WTC11 (cell line): ENCODE measurements at regions of chr20 and their contacts with region 1.

Region 1: DNA sequence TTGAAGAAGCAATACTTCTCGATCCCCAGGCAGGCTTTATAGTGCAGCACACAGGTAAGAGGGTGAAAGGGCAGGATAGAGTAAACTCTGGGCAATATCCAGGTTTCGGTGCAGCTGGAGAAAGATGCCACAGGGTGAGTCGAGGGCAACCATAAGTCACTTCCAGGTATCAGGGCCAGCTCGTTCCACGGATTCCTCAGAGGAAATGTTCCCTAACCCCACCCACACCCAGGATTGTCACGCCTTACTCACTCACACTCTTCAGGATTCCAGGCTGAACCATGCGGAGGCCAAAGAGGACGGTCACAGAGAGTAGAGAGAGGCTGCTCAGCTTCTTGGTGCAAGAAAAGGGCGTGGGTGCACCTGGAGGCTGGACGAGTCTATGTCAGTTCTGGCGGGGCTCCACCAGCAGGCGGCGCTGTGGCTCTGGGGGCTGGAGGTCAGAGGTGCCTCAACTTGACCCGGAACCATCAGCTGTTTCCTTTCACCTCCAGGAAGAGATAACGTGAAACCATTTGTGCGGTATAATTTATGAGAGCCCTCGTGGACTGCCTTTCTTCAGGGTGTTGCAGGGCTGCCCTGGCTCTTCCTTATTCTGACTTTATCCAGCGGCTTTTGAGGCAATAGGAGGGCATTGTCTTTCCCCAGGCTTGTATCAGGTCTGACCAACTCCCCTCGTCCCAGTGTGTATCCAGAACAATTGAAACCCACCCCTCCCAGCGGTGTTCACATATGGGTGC is 14.5 kb upstream of the WFDC12 start:
- DNase-seq: peak; percentile 95
- ATAC-seq: peak; percentile 96
- H3K4me3 Mint-ChIP-seq: no peak overlapping the region
- H3K27ac Mint-ChIP-seq: no peak overlapping the region
- H3K4me1 Mint-ChIP-seq: no peaks in the 10 kb centered on the region
- H3K27me3 Mint-ChIP-seq: peaks cover 30% of the 10 kb centered on the region
- CTCF ChIP-seq: peak; percentile 98

Region 2: DNA sequence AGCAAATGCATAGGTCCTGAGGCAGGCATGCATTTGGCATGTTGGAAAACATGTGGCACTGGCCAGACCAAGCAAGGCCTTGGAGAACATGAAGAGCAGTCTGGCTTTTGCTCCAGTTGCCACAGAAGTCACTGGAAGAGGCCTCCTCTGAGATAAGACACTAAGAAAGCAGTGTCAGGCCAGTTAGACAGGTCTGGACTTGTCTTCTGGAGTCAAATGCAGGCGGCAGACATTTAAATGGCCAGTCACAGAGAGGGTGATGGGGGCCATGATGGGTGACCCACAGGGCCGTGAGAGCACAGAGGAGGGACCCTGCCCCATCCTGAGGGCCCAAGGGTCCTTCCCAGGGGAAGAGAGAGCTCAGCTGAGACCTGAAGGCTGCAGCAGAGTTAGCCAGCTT is 460.5 kb before region 1 on chr20:
- CTCF ChIA-PET with region 1: no interaction called
- POLR2A ChIA-PET with region 1: no interaction called
- DNase-seq: no peak
- ATAC-seq: no peak
- H3K4me3 Mint-ChIP-seq: no peak overlapping the region
- H3K27ac Mint-ChIP-seq: 0 out of 2 replicates have a peak overlapping the region, but pooled peaks have one; percentile 44
- H3K4me1 Mint-ChIP-seq: peaks cover 9% of the 10 kb centered on the region
- H3K27me3 Mint-ChIP-seq: peaks cover 3% of the 10 kb centered on the region; the same call in 1 of the 2 replicates
- CTCF ChIP-seq: no peak

Region 3: DNA sequence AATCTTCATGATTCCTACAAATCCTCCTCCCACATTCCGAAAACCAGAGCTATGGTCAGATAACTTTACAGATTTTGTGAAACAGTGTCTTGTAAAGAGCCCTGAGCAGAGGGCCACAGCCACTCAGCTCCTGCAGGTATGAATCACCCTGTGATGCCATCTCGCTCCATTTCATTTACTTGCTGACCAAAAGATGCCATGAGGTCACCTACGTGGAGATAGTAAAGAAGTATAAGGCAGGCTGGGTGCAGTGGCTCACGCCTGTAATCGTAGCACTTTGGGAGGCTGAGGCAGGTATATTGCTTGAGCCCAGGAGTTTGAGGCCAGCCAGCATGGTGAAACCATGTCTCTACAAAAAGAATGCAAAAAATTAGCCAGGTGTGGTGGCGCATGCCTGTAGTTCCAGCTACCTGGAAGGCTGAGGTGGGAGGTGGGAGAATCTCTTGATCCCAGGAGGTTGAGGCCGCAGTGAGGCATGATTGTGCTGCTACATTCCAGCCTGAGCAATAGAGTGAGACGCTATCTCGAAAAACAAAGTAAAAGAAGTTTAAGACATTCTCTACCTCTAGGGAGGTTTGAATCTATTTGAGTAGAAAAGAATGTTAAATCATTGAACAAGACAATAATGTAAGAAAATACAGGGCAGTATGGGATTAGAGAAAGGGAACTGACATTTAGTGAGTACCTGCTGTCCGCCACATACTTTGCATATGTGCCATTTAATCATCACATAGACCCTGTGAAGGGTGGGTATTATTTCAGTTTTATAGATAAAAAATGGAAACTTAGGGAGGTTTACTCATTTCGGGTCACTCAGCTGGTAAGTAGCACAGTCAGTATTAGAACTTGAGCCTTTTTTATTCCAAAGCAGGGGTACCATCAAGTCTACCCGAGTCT is 141.3 kb before region 1 on chr20:
- CTCF ChIA-PET with region 1: no interaction called
- POLR2A ChIA-PET with region 1: no interaction called
- DNase-seq: no peak
- ATAC-seq: no peak
- H3K4me3 Mint-ChIP-seq: no peak overlapping the region
- H3K27ac Mint-ChIP-seq: peak overlapping the region; percentile 52; the same call in 1 of the 2 replicates
- H3K4me1 Mint-ChIP-seq: peaks cover 5% of the 10 kb centered on the region
- H3K27me3 Mint-ChIP-seq: no peaks in the 10 kb centered on the region
- CTCF ChIP-seq: no peak

Region 4: DNA sequence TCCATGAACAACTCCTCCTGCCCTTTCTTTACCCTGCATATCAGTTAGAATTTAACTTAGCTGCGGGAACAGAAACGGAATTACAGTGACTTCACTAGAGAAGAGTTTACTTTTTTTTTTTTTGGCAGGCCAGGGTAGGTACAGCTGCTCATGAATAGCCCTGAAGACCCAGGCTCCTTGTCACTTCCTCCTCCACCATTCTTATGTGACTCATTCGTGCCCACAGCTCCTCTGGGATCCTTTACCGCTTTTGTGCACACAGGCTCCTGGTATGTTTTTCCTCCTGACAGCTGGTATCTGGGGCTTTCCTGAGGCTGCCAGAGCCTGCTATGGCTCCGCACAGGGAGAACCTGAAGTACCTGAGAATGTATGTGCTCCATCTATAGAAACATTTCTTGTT is 33.9 kb before region 1 on chr20:
- CTCF ChIA-PET with region 1: interaction called, 29 read pairs
- POLR2A ChIA-PET with region 1: no interaction called
- DNase-seq: no peak
- ATAC-seq: no peak
- H3K4me3 Mint-ChIP-seq: no peak overlapping the region
- H3K27ac Mint-ChIP-seq: no peak overlapping the region
- H3K4me1 Mint-ChIP-seq: peaks cover 6% of the 10 kb centered on the region
- H3K27me3 Mint-ChIP-seq: peaks cover 27% of the 10 kb centered on the region
- CTCF ChIP-seq: no peak

Region 5: GRCh38 chr20:45128071-45128470 is 10.7 kb before region 1 on chr20:
- CTCF ChIA-PET with region 1: interaction called, 21 read pairs
- POLR2A ChIA-PET with region 1: no interaction called
- DNase-seq: no peak
- ATAC-seq: no peak
- H3K4me3 Mint-ChIP-seq: no peak overlapping the region
- H3K27ac Mint-ChIP-seq: no peak overlapping the region
- H3K4me1 Mint-ChIP-seq: no peaks in the 10 kb centered on the region
- H3K27me3 Mint-ChIP-seq: peaks cover 37% of the 10 kb centered on the region
- CTCF ChIP-seq: no peak

Region 6: GRCh38 chr20:45193331-45193730 is 54.6 kb after region 1 on chr20:
- CTCF ChIA-PET with region 1: interaction called, 10 read pairs
- POLR2A ChIA-PET with region 1: no interaction called
- DNase-seq: no peak
- ATAC-seq: no peak
- H3K4me3 Mint-ChIP-seq: no peak overlapping the region
- H3K27ac Mint-ChIP-seq: no peak overlapping the region
- H3K4me1 Mint-ChIP-seq: peaks cover 8% of the 10 kb centered on the region
- H3K27me3 Mint-ChIP-seq: 0 out of 2 replicates have a peak, but pooled peaks cover 4% of the 10 kb centered on the region
- CTCF ChIP-seq: no peak

Region 7: DNA sequence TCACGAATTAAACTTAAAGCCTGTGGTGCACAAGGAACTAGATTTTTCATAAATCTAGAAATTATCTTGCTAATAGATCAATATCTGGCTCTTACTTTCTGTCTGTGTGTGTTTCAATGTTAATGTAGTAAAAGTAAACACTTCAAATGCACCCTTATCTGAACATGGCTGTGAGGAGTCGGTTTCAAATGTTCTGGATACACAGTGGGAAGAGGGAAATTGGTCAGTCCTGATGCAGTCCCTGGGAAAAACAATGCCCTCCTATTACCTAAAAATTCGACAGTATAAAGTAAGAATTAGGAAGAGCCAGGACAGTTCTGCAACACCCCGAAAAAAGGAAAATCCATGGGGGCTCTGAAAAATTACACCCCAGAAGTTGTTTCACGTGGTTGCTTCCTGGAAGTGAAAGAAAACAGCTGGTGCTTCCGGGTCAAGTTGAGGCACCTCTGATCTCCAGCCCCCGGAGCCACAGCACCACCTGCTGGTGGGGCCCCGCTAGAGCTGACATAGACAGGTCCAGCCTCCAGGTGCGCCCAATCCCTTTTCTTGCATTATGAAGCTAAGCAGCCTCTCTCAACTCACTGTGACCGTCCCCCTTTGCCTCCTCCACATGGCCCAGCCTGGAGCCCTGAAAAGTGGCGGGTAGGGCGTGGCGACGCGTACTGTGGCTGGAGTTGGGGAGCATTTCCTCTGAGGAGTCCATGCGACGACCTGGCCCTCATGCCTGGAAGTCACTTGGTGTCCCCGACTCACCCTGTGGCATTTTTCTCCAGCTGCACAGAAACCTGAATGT is 90.7 kb after region 1 on chr20:
- CTCF ChIA-PET with region 1: interaction called, 91 read pairs
- POLR2A ChIA-PET with region 1: interaction called, 6 read pairs
- DNase-seq: peak; percentile 90
- ATAC-seq: peak; percentile 96
- H3K4me3 Mint-ChIP-seq: no peak overlapping the region
- H3K27ac Mint-ChIP-seq: no peak overlapping the region
- H3K4me1 Mint-ChIP-seq: no peaks in the 10 kb centered on the region
- H3K27me3 Mint-ChIP-seq: peaks cover 53% of the 10 kb centered on the region
- CTCF ChIP-seq: peak; percentile 85

Region 8: DNA sequence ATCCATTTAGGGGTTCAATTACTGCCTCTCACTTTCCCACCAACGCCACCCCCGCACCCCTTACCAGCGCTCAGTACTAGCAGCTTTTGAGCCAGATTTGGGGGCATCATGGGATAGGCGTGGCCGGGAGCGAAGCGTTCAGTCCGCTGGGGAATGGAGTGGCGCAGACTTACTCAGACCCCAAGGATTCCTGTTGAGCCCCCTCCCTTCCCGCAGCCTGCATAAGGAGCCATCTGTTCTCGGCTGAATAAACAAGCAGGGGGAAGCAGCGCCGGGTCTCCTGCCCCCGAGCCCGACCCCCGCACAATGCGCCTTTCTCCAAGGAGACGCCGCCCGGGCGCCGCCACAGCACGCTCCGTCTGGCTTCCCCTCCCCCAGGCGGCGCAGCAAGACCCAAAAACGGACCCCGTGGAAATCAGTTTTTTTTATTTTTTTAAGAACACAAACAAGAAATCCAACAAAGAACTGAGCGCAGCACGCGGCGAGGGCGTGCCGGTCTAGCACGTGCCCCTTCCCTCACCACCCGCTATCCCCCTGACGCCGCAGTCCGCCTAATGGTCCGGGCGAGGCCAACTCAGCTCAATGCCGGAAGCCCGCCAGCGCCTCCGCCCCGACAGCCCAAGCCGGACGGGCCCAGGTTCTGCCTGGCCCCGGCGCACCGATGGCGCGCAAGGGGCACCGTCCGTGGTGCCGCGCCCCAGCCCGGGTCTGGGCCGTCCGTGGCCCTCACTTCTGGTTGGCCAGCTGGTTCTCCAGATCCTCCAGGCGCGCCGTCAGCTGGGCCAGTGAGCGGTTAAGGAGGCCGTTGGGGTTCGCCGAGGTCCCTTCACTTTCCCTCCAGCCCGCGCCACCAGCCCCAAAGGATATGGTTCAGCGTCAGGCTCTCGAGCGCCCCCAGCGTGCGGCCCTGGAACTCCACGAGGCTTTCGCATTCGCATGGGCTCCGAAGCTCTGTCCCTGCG is 154.6 kb after region 1 on chr20:
- CTCF ChIA-PET with region 1: interaction called, 89 read pairs
- POLR2A ChIA-PET with region 1: interaction called, 4 read pairs
- DNase-seq: peak; percentile 95
- ATAC-seq: peak; percentile 87
- H3K4me3 Mint-ChIP-seq: peak overlapping the region; percentile 71
- H3K27ac Mint-ChIP-seq: no peak overlapping the region
- H3K4me1 Mint-ChIP-seq: peaks cover 7% of the 10 kb centered on the region; the same call in 1 of the 2 replicates
- H3K27me3 Mint-ChIP-seq: peaks cover 66% of the 10 kb centered on the region
- CTCF ChIP-seq: peak; percentile 95